ENCODE measurements at regions of chr10 and their contacts with region 1.

Region 1: GRCh38 chr10:94963901-94964300 is 25.4 kb downstream of the CYP2C9 start:
- DNase-seq: no peak
- ATAC-seq: no peak
- H3K4me3 Mint-ChIP-seq: no peak overlapping the region
- H3K27ac Mint-ChIP-seq: no peak overlapping the region
- H3K4me1 Mint-ChIP-seq: no peaks in the 10 kb centered on the region
- H3K27me3 Mint-ChIP-seq: peaks cover 1% of the 10 kb centered on the region
- CTCF ChIP-seq: no peak

Region 2: DNA sequence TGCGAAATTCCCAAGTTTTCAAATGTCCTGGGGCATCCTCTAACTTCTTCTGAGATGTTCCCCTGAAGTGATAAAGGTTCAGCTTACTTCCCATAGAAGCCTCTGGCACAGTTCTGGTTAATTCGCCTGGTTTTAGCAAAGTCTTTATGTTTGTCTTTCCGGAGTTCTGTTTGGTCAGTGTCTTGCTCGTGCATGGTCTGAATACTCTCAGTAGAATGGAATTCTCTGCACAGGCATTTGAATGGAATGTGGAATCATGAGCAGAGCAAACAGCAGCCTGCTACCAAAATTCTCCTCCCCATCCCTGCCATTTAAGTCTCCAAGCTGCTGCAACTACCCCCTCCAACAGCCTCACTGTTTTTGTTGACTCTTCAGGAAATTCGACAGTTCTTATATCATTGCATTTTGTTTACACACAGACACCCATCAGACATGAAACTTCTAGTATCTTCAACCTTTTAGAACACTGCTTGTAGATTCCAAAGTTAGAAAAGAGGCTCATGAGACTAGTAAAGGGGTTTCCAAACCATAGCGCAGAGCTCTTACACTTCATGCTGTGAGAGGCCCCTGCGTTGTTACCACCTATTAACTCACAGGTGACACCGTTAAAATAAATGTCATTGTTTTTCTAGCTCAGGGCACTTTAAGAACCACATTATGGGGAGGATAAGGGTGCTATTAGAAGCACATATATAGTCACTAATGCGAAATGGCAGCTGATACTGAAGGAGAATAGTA is 840.5 kb before region 1 on chr10:
- CTCF ChIA-PET with region 1: no interaction called
- POLR2A ChIA-PET with region 1: no interaction called
- intact Hi-C with region 1: no loop called
- DNase-seq: no peak
- ATAC-seq: no peak
- H3K4me3 Mint-ChIP-seq: no peak overlapping the region
- H3K27ac Mint-ChIP-seq: no peak overlapping the region
- H3K4me1 Mint-ChIP-seq: no peaks in the 10 kb centered on the region
- H3K27me3 Mint-ChIP-seq: peaks cover 5% of the 10 kb centered on the region
- CTCF ChIP-seq: no peak

Region 3: GRCh38 chr10:94666391-94667102 is 297.4 kb before region 1 on chr10:
- CTCF ChIA-PET with region 1: no interaction called
- POLR2A ChIA-PET with region 1: no interaction called
- intact Hi-C with region 1: no loop called
- DNase-seq: no peak
- ATAC-seq: no peak
- H3K4me3 Mint-ChIP-seq: no peak overlapping the region
- H3K27ac Mint-ChIP-seq: no peak overlapping the region
- H3K4me1 Mint-ChIP-seq: no peaks in the 10 kb centered on the region
- H3K27me3 Mint-ChIP-seq: peaks cover 6% of the 10 kb centered on the region
- CTCF ChIP-seq: no peak

Region 4: DNA sequence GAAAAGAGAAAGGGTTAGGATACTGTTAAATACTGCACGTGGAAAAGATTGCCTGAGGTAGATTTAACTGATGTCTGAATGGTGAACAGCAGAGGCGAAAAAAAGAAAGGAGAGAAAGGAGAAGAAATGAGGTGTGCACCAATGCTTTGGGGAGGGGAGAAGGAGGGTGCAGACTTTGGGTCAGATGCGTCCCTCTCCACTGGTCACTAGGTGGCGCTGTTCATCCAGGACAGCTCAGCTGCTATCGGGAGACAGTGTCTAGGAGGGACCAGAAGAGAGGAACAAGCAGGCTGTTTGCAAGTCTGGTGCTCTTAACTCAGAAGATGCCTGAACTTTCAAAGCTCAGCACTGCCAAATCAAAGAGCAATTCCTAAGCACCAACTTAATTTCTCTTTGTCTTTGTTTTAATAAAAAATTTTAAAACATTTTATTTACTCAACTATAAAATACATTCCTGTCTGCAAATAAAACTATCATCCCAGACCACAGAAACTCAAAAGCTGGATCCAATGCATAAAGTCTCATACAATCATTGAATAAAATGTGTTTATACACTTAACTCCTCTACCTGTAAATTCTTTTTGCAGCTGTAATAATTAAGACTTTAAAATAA is 410.8 kb after region 1 on chr10:
- CTCF ChIA-PET with region 1: no interaction called
- POLR2A ChIA-PET with region 1: no interaction called
- intact Hi-C with region 1: loop called (anchors 5 kb)
- DNase-seq: no peak
- ATAC-seq: peak; percentile 64
- H3K4me3 Mint-ChIP-seq: no peak overlapping the region
- H3K27ac Mint-ChIP-seq: no peak overlapping the region
- H3K4me1 Mint-ChIP-seq: no peaks in the 10 kb centered on the region
- H3K27me3 Mint-ChIP-seq: peaks cover 38% of the 10 kb centered on the region
- CTCF ChIP-seq: no peak